Activated CD8-positive, alpha-beta memory T cell treated with anti-CD3 and anti-CD28 coated beads, Interleukin-2, amount 10 ng/mL, durations not matched to agents 7 days and 5 days (primary cell): ENCODE measurements at regions of chr3 and their contacts with region 1.

Region 1: GRCh38 chr3:11379233-11379823 is 107.1 kb downstream of the ATG7 start:
- DNase-seq: no peak
- ATAC-seq: peak; percentile 27
- H3K4me3 Mint-ChIP-seq: no peak overlapping the region
- H3K27ac Mint-ChIP-seq: no peak overlapping the region
- H3K4me1 Mint-ChIP-seq: peaks cover 5% of the 10 kb centered on the region
- H3K27me3 Mint-ChIP-seq: no peaks in the 10 kb centered on the region

Region 2: DNA sequence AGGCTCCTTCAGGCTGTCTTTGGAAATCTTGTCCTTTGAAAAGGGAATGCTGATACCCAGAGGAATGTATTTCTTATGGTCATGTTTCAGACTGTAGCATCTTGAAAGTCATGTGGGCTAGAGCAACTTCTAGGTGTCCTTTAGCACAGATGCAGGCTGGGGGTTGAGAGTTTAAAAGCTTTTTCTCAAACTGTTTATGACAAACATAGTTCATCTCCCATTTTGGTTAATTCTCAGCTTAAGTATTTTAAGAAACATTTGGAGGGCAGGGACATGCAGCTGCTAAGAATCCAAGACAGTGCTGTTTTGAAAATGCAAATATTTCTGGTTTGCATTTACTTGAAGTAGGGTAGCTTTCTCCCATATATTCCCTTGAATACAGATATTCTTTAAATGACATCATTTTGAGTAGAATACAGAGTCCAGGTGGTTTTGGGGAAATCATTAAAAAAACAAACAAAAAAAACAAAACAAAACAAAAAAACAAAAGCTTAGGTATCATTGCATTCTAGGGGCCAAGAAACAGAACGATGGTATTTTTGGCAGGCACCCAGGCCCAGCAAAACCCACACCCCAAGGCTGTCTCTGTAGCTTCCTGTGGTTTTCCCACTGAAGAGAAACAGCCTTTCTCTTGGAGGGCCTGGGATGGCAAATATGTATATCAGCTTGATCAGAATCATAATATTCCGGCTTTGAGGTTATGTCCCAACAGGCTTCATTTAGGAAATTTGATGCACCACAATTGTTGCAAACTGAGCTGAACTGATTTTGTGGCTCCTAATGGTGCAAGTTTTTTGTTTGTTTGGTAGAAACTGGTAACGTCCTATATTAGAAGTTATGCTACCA is 12.9 kb after region 1 on chr3:
- CTCF ChIA-PET with region 1: interaction called, 13 read pairs
- DNase-seq: no peak
- ATAC-seq: no peak
- H3K4me3 Mint-ChIP-seq: no peak overlapping the region
- H3K27ac Mint-ChIP-seq: no peak overlapping the region
- H3K4me1 Mint-ChIP-seq: peaks cover 10% of the 10 kb centered on the region
- H3K27me3 Mint-ChIP-seq: no peaks in the 10 kb centered on the region

Region 3: GRCh38 chr3:11499144-11499543 is 119.8 kb after region 1 on chr3:
- CTCF ChIA-PET with region 1: no interaction called
- DNase-seq: no peak
- ATAC-seq: no peak
- H3K4me3 Mint-ChIP-seq: no peak overlapping the region
- H3K27ac Mint-ChIP-seq: no peak overlapping the region
- H3K4me1 Mint-ChIP-seq: no peaks in the 10 kb centered on the region
- H3K27me3 Mint-ChIP-seq: no peaks in the 10 kb centered on the region

Region 4: GRCh38 chr3:11651900-11652299 is 272.6 kb after region 1 on chr3:
- CTCF ChIA-PET with region 1: interaction called, 70 read pairs
- DNase-seq: no peak
- ATAC-seq: no peak
- H3K4me3 Mint-ChIP-seq: no peak overlapping the region
- H3K27ac Mint-ChIP-seq: no peak overlapping the region
- H3K4me1 Mint-ChIP-seq: peaks cover 16% of the 10 kb centered on the region
- H3K27me3 Mint-ChIP-seq: no peaks in the 10 kb centered on the region

Region 5: DNA sequence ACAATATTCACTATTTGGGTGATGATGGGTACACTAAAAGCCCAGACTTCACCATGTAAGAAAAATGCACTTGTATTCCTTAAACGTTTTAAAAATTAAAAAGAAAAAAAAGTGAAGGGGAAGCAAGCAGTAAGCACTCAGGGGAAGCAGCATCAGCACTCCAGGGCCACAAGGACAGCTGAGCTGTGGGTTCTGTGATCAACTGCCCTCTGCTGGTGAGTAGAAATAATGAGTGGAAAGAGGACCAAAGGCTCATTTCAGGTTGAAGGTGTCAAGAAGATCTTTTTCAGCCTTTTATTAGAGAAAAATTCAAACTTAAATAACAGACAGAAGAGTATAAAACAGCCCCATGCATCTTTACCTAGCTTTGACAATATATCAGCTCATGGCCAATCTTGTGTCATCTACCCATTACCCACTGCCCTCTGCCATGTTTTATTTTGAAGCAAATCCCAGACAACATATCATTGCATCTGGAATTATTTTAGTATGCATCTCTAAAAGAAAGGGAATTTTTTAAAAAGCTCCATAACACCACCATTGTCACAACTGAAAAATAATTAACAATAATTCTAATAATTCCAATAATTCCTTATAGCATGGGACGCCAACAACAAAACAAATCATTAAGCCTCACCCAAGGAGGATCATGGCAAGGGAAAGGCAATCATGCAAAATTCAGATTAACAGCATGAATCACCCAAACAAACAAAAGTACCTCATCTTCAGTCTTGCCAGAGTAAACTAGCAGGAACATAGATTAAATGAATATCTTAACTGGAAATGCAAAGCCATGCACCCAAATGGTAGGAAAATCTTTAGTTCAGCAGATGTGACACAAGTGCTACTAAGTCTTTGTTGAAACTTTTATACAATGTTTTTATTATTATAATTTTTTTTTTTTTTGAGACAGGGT is 424.9 kb after region 1 on chr3:
- CTCF ChIA-PET with region 1: interaction called, 10 read pairs
- DNase-seq: peak; percentile 68
- ATAC-seq: peak; percentile 91
- H3K4me3 Mint-ChIP-seq: no peak overlapping the region
- H3K27ac Mint-ChIP-seq: no peak overlapping the region
- H3K4me1 Mint-ChIP-seq: peaks cover 15% of the 10 kb centered on the region
- H3K27me3 Mint-ChIP-seq: no peaks in the 10 kb centered on the region

Region 6: GRCh38 chr3:11835028-11835639 is 455.8 kb after region 1 on chr3:
- CTCF ChIA-PET with region 1: interaction called, 10 read pairs
- DNase-seq: no peak
- ATAC-seq: no peak
- H3K4me3 Mint-ChIP-seq: no peak overlapping the region
- H3K27ac Mint-ChIP-seq: no peak overlapping the region
- H3K4me1 Mint-ChIP-seq: no peaks in the 10 kb centered on the region
- H3K27me3 Mint-ChIP-seq: no peaks in the 10 kb centered on the region